ENCODE measurements at regions of chr20 and their contacts with region 1.

Region 1: GRCh38 chr20:41149679-41150131 is 12.4 kb downstream of the PLCG1 start:
- DNase-seq: no peak
- H3K4me3 Mint-ChIP-seq: peak overlapping the region; percentile 21
- H3K27ac Mint-ChIP-seq: peak overlapping the region; percentile 85
- H3K4me1 Mint-ChIP-seq: peaks cover 98% of the 10 kb centered on the region
- H3K27me3 Mint-ChIP-seq: no peaks in the 10 kb centered on the region

Region 2: DNA sequence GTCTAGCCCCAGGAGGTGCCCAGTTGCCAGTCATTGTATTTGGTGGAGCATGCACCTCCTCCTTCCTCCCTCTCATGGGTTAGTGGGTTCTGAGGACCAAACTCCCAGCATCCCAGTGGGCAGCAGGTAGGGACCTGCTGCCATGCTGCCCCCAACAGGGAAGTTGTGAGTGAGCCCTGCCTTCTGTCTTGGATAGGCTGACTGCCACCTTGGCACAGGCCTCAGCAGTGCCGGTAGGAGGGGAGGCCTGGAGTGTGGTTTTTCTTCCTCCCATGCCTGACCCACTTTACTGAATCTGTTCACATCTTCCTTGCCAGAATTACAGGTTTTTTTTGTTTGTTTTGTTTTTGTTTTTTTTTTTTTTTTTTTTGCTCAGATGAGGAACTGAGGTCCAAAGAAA is 12.2 kb after region 1 on chr20:
- CTCF ChIA-PET with region 1: interaction called, 240 read pairs
- DNase-seq: no peak
- H3K4me3 Mint-ChIP-seq: no peak overlapping the region
- H3K27ac Mint-ChIP-seq: peak overlapping the region; percentile 34
- H3K4me1 Mint-ChIP-seq: peaks cover 72% of the 10 kb centered on the region
- H3K27me3 Mint-ChIP-seq: no peaks in the 10 kb centered on the region

Region 3: GRCh38 chr20:41261790-41262717 is 112.3 kb after region 1 on chr20:
- CTCF ChIA-PET with region 1: no interaction called
- DNase-seq: no peak
- H3K4me3 Mint-ChIP-seq: no peak overlapping the region
- H3K27ac Mint-ChIP-seq: no peak overlapping the region
- H3K4me1 Mint-ChIP-seq: no peaks in the 10 kb centered on the region
- H3K27me3 Mint-ChIP-seq: no peaks in the 10 kb centered on the region

Measured in activated naive CD4-positive, alpha-beta T cell treated with anti-CD3 and anti-CD28 coated beads, Interleukin-2, amount 10 ng/mL, durations not matched to agents 7 days and 5 days (primary cell).